CD4-positive, alpha-beta memory T cell (primary cell): ENCODE measurements at regions of chr10 and their contacts with region 1.

Region 1: DNA sequence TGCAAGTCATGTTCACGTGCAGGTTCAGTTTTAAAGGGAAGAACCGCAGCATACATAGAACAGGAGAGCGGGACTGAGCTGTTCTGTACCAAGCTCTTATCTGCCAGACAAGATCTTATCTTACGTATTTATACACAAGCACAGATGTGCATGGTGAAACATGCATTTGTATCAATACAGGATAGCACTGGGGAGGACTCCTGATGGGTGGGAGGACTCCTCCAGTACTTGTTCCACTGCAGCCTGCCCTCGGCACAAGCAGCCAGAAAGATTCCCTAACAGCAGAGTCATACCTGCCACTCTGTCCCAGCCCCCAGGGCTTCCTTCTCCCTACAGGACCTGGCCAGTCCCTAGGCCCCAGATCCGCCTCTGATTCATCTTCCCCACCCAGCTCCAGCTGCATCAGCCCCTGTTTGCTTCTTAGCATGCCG is 13.2 kb upstream of the PRKCQ start:
- DNase-seq: peak in 4 of 5 donors; percentile 24 to 68 (median 28)
- H3K4me3 ChIP-seq: no peak overlapping the region
- H3K4me3 Mint-ChIP-seq: peak overlapping the region; percentile 39 to 81 (median 74)
- H3K27ac ChIP-seq: peak overlapping the region; percentile 40
- H3K27ac Mint-ChIP-seq: peak overlapping the region; percentile 88 to 97 (median 94)
- H3K4me1 ChIP-seq: peaks cover 93% of the 10 kb centered on the region
- H3K4me1 Mint-ChIP-seq: peaks cover 63 to 97% (median 77%) of the 10 kb centered on the region in 4 donors
- H3K27me3 ChIP-seq: no peaks in the 10 kb centered on the region
- H3K27me3 Mint-ChIP-seq: no peaks in the 10 kb centered on the region

Region 2: GRCh38 chr10:6607778-6608177 is 14.5 kb after region 1 on chr10:
- CTCF ChIA-PET with region 1: interaction called, 19 read pairs
- POLR2A ChIA-PET with region 1: interaction called, 41 read pairs
- intact Hi-C with region 1: loop called (anchors 1 kb)
- DNase-seq: no peak
- H3K4me3 ChIP-seq: no peak overlapping the region
- H3K4me3 Mint-ChIP-seq: peak overlapping the region in 1 of 8 donors; percentile 72
- H3K27ac ChIP-seq: peak overlapping the region; percentile 43
- H3K27ac Mint-ChIP-seq: peak overlapping the region; percentile 73 to 97 (median 93)
- H3K4me1 ChIP-seq: peaks cover 47% of the 10 kb centered on the region
- H3K4me1 Mint-ChIP-seq: peaks cover 43 to 74% (median 53%) of the 10 kb centered on the region in 4 donors
- H3K27me3 ChIP-seq: no peaks in the 10 kb centered on the region
- H3K27me3 Mint-ChIP-seq: no peaks in the 10 kb centered on the region

Region 3: DNA sequence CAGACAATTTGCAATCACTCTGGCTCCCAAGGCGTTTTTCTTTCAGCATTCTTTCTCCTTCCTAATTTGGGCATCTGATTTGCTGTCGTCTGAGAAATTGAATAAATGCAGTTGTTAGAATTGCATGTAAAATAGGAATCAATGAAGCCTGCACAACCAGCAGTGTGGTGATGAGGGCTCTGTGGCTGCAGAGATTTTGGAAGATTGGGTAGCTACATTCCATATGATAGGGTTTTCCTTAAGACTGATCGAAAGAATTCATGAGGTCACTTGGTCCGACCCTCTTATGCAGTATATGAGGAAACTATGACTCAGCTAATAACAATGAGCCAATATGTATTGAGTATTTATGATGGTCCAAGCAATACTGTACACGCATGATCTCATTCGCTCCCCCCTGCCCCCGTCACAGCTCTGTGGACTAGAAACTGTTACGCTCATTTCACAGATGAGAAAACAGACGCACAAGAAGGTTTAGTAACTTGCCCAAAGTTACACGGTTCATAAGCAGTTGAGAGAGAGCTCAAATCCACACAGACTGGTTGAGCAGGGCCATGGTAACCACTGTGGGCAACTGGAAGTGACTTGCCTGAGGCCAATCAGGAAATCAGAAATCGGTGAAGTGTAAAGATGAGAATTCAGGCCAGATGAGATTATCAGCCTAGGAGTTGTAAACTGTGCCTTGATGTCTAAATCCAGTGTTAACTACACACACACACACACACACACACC is 1988.4 kb after region 1 on chr10:
- CTCF ChIA-PET with region 1: no interaction called
- POLR2A ChIA-PET with region 1: no interaction called
- intact Hi-C with region 1: no loop called
- DNase-seq: no peak
- H3K4me3 ChIP-seq: no peak overlapping the region
- H3K4me3 Mint-ChIP-seq: no peak overlapping the region
- H3K27ac ChIP-seq: no peak overlapping the region
- H3K27ac Mint-ChIP-seq: no peak overlapping the region
- H3K4me1 ChIP-seq: no peaks in the 10 kb centered on the region
- H3K4me1 Mint-ChIP-seq: peaks cover 0 to 6% (median 3%) of the 10 kb centered on the region in 4 donors
- H3K27me3 ChIP-seq: no peaks in the 10 kb centered on the region
- H3K27me3 Mint-ChIP-seq: peaks cover 19% of the 10 kb centered on the region in 2 donors